OCI-LY7 (cell line): ENCODE measurements at regions of chr17 and their contacts with region 1.

Region 1: DNA sequence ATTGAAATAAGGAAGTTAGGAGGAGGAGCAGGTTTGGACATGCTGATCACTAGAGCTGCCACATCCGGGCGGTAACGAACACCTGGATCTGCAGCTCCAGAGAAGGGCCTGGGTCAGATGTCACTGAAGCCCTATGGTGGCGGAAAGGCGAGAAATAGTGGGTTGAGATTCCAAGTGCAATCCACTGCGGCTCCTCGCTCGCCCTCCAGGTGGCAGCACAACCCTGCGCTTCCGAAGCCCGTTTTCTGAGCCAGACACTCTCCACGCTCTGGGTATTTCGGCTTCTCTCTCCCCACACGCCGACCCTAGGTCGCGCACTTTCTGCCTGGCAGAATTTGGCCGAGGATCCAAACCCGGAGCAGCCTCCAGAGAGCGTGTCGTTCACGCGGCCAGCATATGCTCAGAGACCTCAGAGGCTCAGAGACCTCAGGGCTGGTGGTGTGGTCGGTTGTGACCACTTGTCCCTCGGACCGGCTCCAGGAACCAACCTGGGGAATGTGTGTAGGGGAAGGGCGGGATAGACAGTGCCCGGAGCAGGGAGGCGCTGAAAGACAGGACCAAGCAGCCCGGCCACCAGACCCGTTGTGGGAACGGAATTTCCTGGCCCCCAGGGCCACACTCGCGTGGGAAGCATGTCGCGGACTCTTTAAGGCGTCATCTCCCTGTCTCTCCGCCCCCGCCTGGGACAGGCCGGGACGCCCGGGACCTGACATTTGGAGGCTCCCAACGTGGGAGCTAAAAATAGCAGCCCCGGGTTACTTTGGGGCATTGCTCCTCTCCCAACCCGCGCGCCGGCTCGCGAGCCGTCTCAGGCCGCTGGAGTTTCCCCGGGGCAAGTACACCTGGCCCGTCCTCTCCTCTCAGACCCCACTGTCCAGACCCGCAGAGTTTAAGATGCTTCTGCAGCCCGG is 744 bp upstream of the SLC2A4 start:
- DNase-seq: peak; percentile 92
- H3K4me3 ChIP-seq: peak overlapping the region; percentile 59
- H3K27ac ChIP-seq: peak overlapping the region; percentile 57
- H3K4me1 ChIP-seq: peaks cover 32% of the 10 kb centered on the region
- CTCF ChIP-seq: peak; percentile 96

Region 2: DNA sequence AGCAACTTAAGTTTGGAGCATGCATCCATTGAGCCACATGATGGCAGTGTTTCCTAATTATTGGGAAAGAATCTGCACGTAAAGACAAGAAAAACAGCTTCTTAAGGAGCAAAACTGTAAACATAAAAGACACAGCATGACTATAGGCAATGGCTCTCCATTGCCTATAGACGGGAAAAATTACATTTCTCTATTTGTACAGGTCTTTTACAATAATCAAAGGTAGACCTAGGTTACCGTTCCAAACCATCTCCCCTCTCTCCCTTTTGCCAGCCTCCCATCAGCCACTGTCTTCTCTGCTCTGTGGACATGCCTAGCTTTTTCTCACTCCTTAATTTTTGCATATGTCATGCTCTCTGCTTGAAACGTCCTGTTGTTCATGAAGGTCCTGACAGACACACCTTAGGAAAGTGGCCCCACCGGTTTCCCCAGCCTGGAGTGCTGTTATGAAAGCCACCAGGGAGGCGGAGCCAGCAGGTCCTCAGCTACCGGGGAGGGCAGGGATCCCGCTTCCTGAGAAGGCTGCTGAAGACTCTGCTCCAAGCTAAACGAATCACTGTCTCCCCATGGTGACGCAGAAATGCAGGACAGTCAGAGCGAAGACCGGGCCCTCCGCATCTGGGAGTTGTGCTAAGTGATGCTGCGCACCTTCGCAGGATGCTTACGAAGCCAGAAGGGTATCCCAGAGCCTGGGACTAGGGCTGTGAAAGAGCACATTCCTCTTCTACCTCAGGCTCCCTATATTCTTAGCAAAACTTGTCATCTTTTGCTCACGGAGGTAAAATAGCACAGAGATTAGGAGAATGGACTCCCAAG is 234.7 kb before region 1 on chr17:
- CTCF ChIA-PET with region 1: no interaction called
- POLR2A ChIA-PET with region 1: no interaction called
- intact Hi-C with region 1: loop called (anchors 1 kb)
- DNase-seq: peak; percentile 74
- H3K4me3 ChIP-seq: peak overlapping the region; percentile 20
- H3K27ac ChIP-seq: no peak overlapping the region
- H3K4me1 ChIP-seq: peaks cover 19% of the 10 kb centered on the region
- CTCF ChIP-seq: peak; percentile 98

Region 3: DNA sequence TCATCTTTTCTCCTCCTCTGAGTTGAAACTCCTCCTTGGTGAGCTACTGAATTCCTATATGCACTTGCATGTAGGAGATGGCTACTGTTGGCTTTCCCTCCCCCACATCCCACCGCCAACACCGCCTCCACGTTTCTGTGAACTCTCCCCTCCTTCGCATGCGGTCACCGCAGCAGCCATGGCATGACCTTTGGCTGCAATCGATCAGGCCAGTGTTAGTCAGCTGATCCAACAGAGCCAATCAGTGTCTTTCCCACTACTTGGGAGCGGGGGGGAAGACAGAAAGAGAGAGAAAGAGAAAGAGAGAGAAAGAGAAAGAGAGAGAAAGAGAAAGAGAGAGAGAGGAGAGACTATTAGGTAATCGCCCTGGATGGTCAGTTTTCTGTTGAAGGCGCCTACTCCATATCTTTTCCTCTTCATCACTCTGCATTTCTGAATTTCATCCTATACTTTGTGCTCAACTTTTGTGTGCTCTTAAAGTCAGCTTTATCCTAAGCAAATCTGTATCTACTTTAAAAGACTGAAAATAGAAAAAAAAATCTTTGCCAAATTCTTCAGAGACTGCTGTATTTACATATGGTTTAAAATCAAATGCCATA is 124.3 kb before region 1 on chr17:
- CTCF ChIA-PET with region 1: no interaction called
- POLR2A ChIA-PET with region 1: no interaction called
- intact Hi-C with region 1: no loop called
- DNase-seq: no peak
- H3K4me3 ChIP-seq: no peak overlapping the region
- H3K27ac ChIP-seq: no peak overlapping the region
- H3K4me1 ChIP-seq: no peaks in the 10 kb centered on the region
- CTCF ChIP-seq: no peak

Region 4: DNA sequence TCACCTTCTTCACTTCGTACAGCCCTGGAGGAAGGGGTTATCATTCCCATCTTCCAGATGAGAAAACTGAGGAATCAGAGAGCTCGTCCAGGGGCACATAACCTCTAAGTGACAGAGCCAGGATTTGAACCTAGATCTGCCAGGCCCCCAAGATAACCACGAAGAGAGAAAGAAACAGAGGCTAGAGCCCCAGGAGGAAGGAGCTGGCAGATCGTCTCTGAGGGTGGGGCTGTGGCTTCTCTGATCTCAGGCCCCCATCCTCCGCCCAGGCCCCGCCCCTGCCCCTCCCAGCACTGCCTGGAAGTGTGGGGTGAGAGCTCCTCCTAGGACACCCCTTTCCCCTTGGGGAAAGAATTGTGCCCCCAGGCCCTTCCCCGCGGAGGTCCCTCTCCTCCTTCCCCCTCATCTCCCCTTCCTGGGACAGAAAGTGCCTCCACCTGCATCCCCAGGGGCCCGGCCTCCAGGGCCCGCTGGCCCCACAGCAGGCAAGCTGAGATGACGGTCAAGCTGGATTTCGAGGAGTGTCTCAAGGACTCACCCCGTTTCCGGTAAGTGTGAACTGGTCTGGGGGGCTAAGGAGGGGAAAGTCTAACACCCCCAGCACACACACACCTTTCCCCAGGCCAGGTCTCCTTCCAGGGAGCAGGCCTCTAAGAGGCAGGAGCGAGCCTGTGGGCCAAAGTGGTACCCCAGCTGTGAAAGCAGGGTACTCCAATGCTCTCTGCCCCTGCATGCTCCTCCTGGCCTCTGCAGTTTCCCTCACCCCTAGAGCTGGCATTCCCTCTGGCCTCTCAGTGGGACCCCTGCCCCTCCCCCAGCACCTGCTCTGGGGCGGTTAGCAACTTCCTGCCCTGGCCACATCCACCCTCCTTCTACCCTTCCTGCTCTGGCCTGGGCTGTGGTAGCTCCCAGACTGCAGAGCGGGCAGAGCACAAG is 55.7 kb after region 1 on chr17 and contains the start of gene ACAP1:
- CTCF ChIA-PET with region 1: interaction called, 3 read pairs
- POLR2A ChIA-PET with region 1: interaction called, 4 read pairs
- intact Hi-C with region 1: loop called (anchors 2 kb)
- DNase-seq: peak; percentile 81
- H3K4me3 ChIP-seq: peak within 1 kb of the TSS; percentile 78
- H3K27ac ChIP-seq: peak within 1 kb of the TSS; percentile 79
- H3K4me1 ChIP-seq: peaks cover 52% of the 10 kb centered on the region
- CTCF ChIP-seq: no peak; the same call in 1 of the 2 replicates
- total RNA-seq, gene ACAP1: 113 and 117 TPM in 2 replicates